Left cardiac atrium (tissue), 4 donors: ENCODE measurements at regions of chr13 and their contacts with region 1.

Region 1: GRCh38 chr13:60654415-60654814 is 257.4 kb downstream of the TDRD3 start:
- DNase-seq: peak; percentile 45
- ATAC-seq: peak; percentile 89 to 94

Region 2: GRCh38 chr13:61255035-61255796 is 600.8 kb after region 1 on chr13:
- intact Hi-C with region 1: loop called in 1 of 2 experiments (anchors 10 kb)
- DNase-seq: no peak
- ATAC-seq: no peak